ENCODE measurements at regions of chr1 and their contacts with region 1.

Region 1: GRCh38 chr1:28648474-28649198 is at the start of gene RNU11:
- DNase-seq: peak; percentile 85 to 90
- H3K4me3 ChIP-seq: peak within 1 kb of the TSS; percentile 29
- H3K4me3 Mint-ChIP-seq: peak within 1 kb of the TSS; percentile 88
- H3K27ac Mint-ChIP-seq: peak within 1 kb of the TSS; percentile 96
- H3K4me1 ChIP-seq: peaks cover 9% of the 10 kb centered on the region; the same call in 1 of the 2 replicates
- H3K4me1 Mint-ChIP-seq: peaks cover 16% of the 10 kb centered on the region
- H3K27me3 ChIP-seq: no peaks in the 10 kb centered on the region
- H3K27me3 Mint-ChIP-seq: no peaks in the 10 kb centered on the region
- CTCF ChIP-seq: no peak
- total RNA-seq, gene RNU11: not detected in 2 replicates

Region 2: GRCh38 chr1:28668191-28668955 is 19.7 kb after region 1 on chr1 and contains the start of gene GMEB1:
- CTCF ChIA-PET with region 1: no interaction called
- POLR2A ChIA-PET with region 1: interaction called, 26 read pairs
- intact Hi-C with region 1: loop called (anchors 1 kb)
- DNase-seq: peak; percentile 81 to 87
- H3K4me3 ChIP-seq: peak within 1 kb of the TSS; percentile 46
- H3K4me3 Mint-ChIP-seq: peak within 1 kb of the TSS; percentile 91
- H3K27ac Mint-ChIP-seq: peak within 1 kb of the TSS; percentile 97
- H3K4me1 ChIP-seq: peaks cover 9% of the 10 kb centered on the region
- H3K4me1 Mint-ChIP-seq: peaks cover 8% of the 10 kb centered on the region
- H3K27me3 ChIP-seq: no peaks in the 10 kb centered on the region
- H3K27me3 Mint-ChIP-seq: no peaks in the 10 kb centered on the region
- CTCF ChIP-seq: no peak
- total RNA-seq, gene GMEB1: 4.3 and 5.2 TPM in 2 replicates

Region 3: GRCh38 chr1:28871631-28872401 is 223.2 kb after region 1 on chr1:
- CTCF ChIA-PET with region 1: interaction called, 8 read pairs
- POLR2A ChIA-PET with region 1: no interaction called
- intact Hi-C with region 1: loop called (anchors 2 kb)
- DNase-seq: peak; percentile 71 to 82
- H3K4me3 ChIP-seq: no peak overlapping the region
- H3K4me3 Mint-ChIP-seq: peak overlapping the region; percentile 12
- H3K27ac Mint-ChIP-seq: peak overlapping the region; percentile 19
- H3K4me1 ChIP-seq: peaks cover 9% of the 10 kb centered on the region
- H3K4me1 Mint-ChIP-seq: peaks cover 19% of the 10 kb centered on the region
- H3K27me3 ChIP-seq: no peaks in the 10 kb centered on the region
- H3K27me3 Mint-ChIP-seq: no peaks in the 10 kb centered on the region
- CTCF ChIP-seq: no peak

Measured in Caco-2 (cell line).